T-cell (primary cell): ENCODE measurements at regions of chr16 and their contacts with region 1.

Region 1: GRCh38 chr16:9114842-9115241 is 23.4 kb downstream of the HAPSTR1 start:
- DNase-seq: no peak
- ATAC-seq: peak in 1 of 4 experiments; percentile 17
- H3K4me3 ChIP-seq: no peak overlapping the region
- H3K4me3 Mint-ChIP-seq: peak overlapping the region in 1 of 3 donors; percentile 63
- H3K27ac ChIP-seq: no peak overlapping the region
- H3K27ac Mint-ChIP-seq: peak overlapping the region; percentile 63 to 82
- H3K4me1 ChIP-seq: peaks cover 15 to 22% of the 10 kb centered on the region in 2 experiments
- H3K4me1 Mint-ChIP-seq: peaks cover 79 to 98% (median 89%) of the 10 kb centered on the region in 3 donors
- H3K27me3 ChIP-seq: no peaks in the 10 kb centered on the region
- H3K27me3 Mint-ChIP-seq: no peaks in the 10 kb centered on the region

Region 2: GRCh38 chr16:9040791-9041412 is 73.9 kb before region 1 on chr16:
- CTCF ChIA-PET with region 1: no interaction called
- POLR2A ChIA-PET with region 1: interaction called in 1 of 2 experiments, 11 read pairs
- DNase-seq: no peak
- ATAC-seq: no peak
- H3K4me3 ChIP-seq: no peak overlapping the region
- H3K4me3 Mint-ChIP-seq: no peak overlapping the region
- H3K27ac ChIP-seq: no peak overlapping the region
- H3K27ac Mint-ChIP-seq: no peak overlapping the region
- H3K4me1 ChIP-seq: no peaks in the 10 kb centered on the region
- H3K4me1 Mint-ChIP-seq: no peaks in the 10 kb centered on the region
- H3K27me3 ChIP-seq: peaks cover 0 to 4% of the 10 kb centered on the region in 2 experiments
- H3K27me3 Mint-ChIP-seq: peaks cover 0 to 2% of the 10 kb centered on the region in 2 donors

Region 3: DNA sequence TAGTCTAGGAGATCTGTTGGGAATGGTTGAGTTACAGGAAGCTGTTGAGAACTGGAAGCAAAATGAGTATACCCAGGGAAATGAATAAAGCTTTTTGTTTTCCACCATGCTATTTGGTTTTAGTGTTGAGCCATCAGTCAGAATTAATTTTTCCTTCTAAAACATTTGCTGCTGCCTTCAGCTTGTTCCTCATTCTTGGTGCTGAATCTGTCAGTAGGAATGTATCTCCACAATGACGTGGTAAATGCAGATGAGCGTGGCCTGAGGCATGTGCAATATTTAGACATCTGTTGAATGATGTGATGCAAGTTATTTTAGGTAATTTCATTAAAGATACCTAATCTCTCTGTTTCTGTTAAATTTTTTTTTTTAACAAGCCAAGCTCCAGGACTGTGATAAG is 12.5 kb before region 1 on chr16:
- CTCF ChIA-PET with region 1: no interaction called
- POLR2A ChIA-PET with region 1: interaction called, 8 to 14 read pairs
- DNase-seq: no peak
- ATAC-seq: no peak
- H3K4me3 ChIP-seq: no peak overlapping the region
- H3K4me3 Mint-ChIP-seq: peak overlapping the region; percentile 54 to 76 (median 58)
- H3K27ac ChIP-seq: peak overlapping the region; percentile 31
- H3K27ac Mint-ChIP-seq: peak overlapping the region; percentile 23 to 71
- H3K4me1 ChIP-seq: peaks cover 57 to 67% of the 10 kb centered on the region in 2 experiments
- H3K4me1 Mint-ChIP-seq: peaks cover 97 to 99% (median 97%) of the 10 kb centered on the region in 3 donors
- H3K27me3 ChIP-seq: no peaks in the 10 kb centered on the region
- H3K27me3 Mint-ChIP-seq: no peaks in the 10 kb centered on the region